Activated CD4-positive, alpha-beta memory T cell treated with anti-CD3 and anti-CD28 coated beads, Interleukin-2, amount 10 ng/mL, durations not matched to agents 7 days and 5 days (primary cell): ENCODE measurements at regions of chr3 and their contacts with region 1.

Region 1: GRCh38 chr3:48439820-48440589 is at the starts of genes CCDC51 and TMA7:
- DNase-seq: peak; percentile 99
- H3K4me3 Mint-ChIP-seq: peak within 1 kb of the TSS; percentile 89
- H3K27ac Mint-ChIP-seq: peak within 1 kb of the TSS; percentile 93
- H3K4me1 Mint-ChIP-seq: peaks cover 43% of the 10 kb centered on the region
- H3K27me3 Mint-ChIP-seq: no peaks in the 10 kb centered on the region
- total RNA-seq, gene CCDC51: 14.9 to 17.5 TPM
- total RNA-seq, gene TMA7: 240 to 241 TPM

Region 2: DNA sequence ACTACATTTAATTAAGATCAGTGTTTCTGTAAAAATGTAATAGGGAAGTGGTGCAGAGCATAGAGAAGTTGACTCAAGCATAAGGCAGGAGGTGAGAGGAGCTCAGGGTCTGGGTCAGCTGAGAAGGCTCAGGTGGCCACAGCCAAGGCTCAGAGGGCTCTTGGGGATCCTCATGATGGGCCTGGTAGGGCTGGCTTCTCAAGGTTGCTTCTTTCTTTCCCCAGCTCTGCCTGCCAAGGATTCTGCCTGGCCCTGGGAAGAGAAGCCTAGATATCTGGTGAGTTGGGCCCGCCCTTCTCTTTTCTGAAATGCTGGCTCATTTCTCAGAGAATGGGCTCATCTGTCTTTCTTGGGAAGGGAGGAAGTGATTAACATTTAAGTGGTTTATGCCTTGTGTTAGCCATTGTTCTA is 192.6 kb before region 1 on chr3:
- CTCF ChIA-PET with region 1: interaction called, 12 read pairs
- POLR2A ChIA-PET with region 1: interaction called, 10 read pairs
- DNase-seq: peak; percentile 29
- H3K4me3 Mint-ChIP-seq: peak overlapping the region; percentile 35
- H3K27ac Mint-ChIP-seq: peak overlapping the region; percentile 91
- H3K4me1 Mint-ChIP-seq: peaks cover 48% of the 10 kb centered on the region
- H3K27me3 Mint-ChIP-seq: no peaks in the 10 kb centered on the region

Region 3: GRCh38 chr3:48400824-48401433 is 39.1 kb before region 1 on chr3:
- CTCF ChIA-PET with region 1: interaction called, 261 read pairs
- POLR2A ChIA-PET with region 1: interaction called, 13 read pairs
- DNase-seq: peak; percentile 72
- H3K4me3 Mint-ChIP-seq: no peak overlapping the region
- H3K27ac Mint-ChIP-seq: no peak overlapping the region
- H3K4me1 Mint-ChIP-seq: peaks cover 2% of the 10 kb centered on the region
- H3K27me3 Mint-ChIP-seq: peaks cover 3% of the 10 kb centered on the region

Region 4: DNA sequence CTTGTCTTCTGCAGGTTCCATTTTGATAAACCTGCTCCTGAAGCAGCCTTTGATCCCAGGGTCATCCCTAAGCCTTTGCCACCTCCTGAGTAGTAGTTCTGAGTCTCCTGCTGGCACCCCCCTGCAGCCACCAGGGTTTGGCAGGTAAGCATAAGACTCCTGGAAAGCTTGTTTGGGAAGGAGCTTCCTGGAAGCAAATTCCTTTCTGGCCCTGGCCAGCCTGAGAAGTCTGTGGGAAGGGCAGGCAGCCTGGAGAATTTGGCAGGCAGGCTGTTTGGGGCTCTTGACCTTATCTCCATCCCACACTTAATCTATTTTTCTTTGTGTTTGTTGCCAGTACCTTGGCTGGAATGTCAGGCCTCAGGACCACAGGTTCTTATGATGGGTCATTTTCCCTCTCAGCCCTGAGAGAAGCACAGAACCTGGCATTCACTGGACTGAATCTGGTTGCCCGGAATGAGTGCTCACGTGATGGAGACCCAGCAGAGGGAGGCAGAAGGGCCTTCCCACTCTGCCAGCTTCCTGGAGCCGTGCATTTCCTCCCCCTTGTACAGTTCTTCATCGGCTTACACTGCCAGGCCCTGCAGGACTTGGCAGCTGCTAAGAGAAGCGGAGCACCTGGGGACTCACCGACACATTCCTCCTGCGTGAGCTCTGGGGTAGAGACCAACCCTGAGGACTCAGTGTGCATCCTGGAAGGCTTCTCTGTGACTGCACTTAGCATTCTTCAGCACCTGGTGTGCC is 19.9 kb after region 1 on chr3:
- CTCF ChIA-PET with region 1: interaction called, 25 read pairs
- POLR2A ChIA-PET with region 1: interaction called, 58 read pairs
- DNase-seq: no peak
- H3K4me3 Mint-ChIP-seq: no peak overlapping the region
- H3K27ac Mint-ChIP-seq: no peak overlapping the region
- H3K4me1 Mint-ChIP-seq: peaks cover 6% of the 10 kb centered on the region
- H3K27me3 Mint-ChIP-seq: no peaks in the 10 kb centered on the region

Region 5: GRCh38 chr3:48507351-48508061 is 67.5 kb after region 1 on chr3:
- CTCF ChIA-PET with region 1: interaction called, 43 read pairs
- POLR2A ChIA-PET with region 1: interaction called, 5 read pairs
- DNase-seq: peak; percentile 82
- H3K4me3 Mint-ChIP-seq: no peak overlapping the region
- H3K27ac Mint-ChIP-seq: peak overlapping the region; percentile 83
- H3K4me1 Mint-ChIP-seq: peaks cover 56% of the 10 kb centered on the region
- H3K27me3 Mint-ChIP-seq: peaks cover 16% of the 10 kb centered on the region

Region 6: GRCh38 chr3:48581621-48582481 is 141.8 kb after region 1 on chr3:
- CTCF ChIA-PET with region 1: no interaction called
- POLR2A ChIA-PET with region 1: no interaction called
- DNase-seq: no peak
- H3K4me3 Mint-ChIP-seq: no peak overlapping the region
- H3K27ac Mint-ChIP-seq: no peak overlapping the region
- H3K4me1 Mint-ChIP-seq: no peaks in the 10 kb centered on the region
- H3K27me3 Mint-ChIP-seq: no peaks in the 10 kb centered on the region

Region 7: GRCh38 chr3:48635222-48636021 is 195.4 kb after region 1 on chr3 and contains the start of gene SLC26A6:
- CTCF ChIA-PET with region 1: interaction called, 14 read pairs
- POLR2A ChIA-PET with region 1: interaction called, 3 read pairs
- DNase-seq: peak; percentile 96
- H3K4me3 Mint-ChIP-seq: peak within 1 kb of the TSS; percentile 91
- H3K27ac Mint-ChIP-seq: peak within 1 kb of the TSS; percentile 87
- H3K4me1 Mint-ChIP-seq: peaks cover 31% of the 10 kb centered on the region
- H3K27me3 Mint-ChIP-seq: no peaks in the 10 kb centered on the region
- total RNA-seq, gene SLC26A6: 55.4 to 56.0 TPM

Region 8: DNA sequence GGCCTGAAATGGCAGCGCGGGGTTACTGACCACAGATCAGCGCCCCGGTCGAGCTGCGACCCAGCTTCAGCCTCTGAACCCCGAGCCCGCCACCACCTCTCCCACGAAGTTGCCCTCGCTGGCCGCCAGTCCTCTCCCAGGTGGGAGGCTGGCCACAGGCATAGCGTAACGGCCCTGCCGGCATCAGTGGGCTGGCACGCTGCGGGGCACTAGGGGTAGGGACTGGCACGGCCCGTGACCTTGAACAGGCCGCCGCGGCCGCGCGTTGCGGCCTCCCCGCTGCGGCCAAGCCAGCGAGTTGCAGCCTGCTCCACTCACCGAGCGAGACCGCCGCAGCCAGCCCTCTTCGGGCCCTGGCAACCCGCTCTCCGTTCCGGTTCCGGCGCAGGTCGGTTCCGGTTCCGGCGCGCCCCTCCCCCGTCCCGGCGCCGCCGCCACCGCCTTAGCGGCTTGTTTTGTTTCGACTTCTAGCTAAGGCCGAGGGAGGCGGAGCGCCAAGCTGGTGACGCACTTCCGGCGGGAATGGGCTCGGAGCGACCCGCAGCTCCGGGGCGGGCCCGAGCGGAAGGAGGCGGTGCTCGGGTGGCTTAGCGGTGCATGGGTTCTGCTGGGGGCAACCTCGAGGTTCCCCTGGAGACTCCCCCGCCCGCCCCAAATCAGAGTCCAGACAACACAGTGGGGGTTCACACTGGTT is 680.6 kb after region 1 on chr3 and contains the start of gene USP19:
- CTCF ChIA-PET with region 1: no interaction called
- POLR2A ChIA-PET with region 1: no interaction called
- DNase-seq: peak; percentile 95
- H3K4me3 Mint-ChIP-seq: peak within 1 kb of the TSS; percentile 83
- H3K27ac Mint-ChIP-seq: peak within 1 kb of the TSS; percentile 90
- H3K4me1 Mint-ChIP-seq: peaks cover 24% of the 10 kb centered on the region
- H3K27me3 Mint-ChIP-seq: no peaks in the 10 kb centered on the region
- total RNA-seq, gene USP19: 61.2 to 61.5 TPM